Activated CD4-positive, alpha-beta T cell treated with anti-CD3 and anti-CD28 coated beads, Interleukin-2, amount 10 ng/mL, durations not matched to agents 24 days and 14 days (primary cell): ENCODE measurements at regions of chr5 and their contacts with region 1.

Region 1: GRCh38 chr5:5421961-5422818 is at the start of gene ICE1:
- DNase-seq: peak; percentile 98
- H3K4me3 Mint-ChIP-seq: peak within 1 kb of the TSS; percentile 97
- H3K27ac Mint-ChIP-seq: peak within 1 kb of the TSS; percentile 98
- H3K4me1 Mint-ChIP-seq: peaks cover 22% of the 10 kb centered on the region
- H3K27me3 Mint-ChIP-seq: no peaks in the 10 kb centered on the region
- total RNA-seq, gene ICE1: 35.6 and 36.9 TPM in 2 replicates

Region 2: DNA sequence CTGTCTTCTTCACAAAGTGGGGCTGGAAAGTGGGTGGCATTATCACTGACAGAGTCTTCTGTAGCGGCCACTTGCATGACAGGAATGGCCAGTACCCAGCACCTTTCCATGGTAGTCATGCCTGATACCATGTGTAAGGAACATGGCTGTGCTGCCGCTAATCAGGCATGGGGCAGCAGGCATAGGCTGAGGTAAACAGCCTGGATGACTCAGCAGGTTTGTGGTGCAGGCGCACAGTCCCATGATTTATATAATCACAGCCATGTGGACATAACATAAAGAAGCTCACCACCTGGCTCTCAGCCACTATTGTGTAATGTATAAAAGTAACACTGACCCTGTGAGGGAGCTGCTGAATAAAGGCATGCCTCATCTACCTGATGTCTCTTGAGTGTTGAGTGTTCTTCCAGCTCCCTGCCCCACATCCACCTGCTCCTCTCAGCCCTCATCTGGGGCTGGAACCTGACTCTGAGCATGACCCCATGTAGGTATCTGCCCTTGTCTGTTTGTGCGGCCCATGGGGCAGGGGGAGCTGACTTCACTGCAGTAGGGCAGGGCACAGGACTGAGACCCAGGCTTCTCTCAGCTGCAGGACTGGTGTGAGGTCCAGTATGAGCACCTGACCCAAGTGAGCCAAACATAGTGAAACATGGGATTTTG is 12.9 kb before region 1 on chr5:
- intact Hi-C with region 1: no loop called
- DNase-seq: no peak
- H3K4me3 Mint-ChIP-seq: no peak overlapping the region
- H3K27ac Mint-ChIP-seq: no peak overlapping the region
- H3K4me1 Mint-ChIP-seq: no peaks in the 10 kb centered on the region
- H3K27me3 Mint-ChIP-seq: no peaks in the 10 kb centered on the region

Region 3: GRCh38 chr5:5523066-5523505 is 100.9 kb after region 1 on chr5:
- intact Hi-C with region 1: loop called (anchors 5 kb)
- DNase-seq: peak; percentile 87
- H3K4me3 Mint-ChIP-seq: peak overlapping the region; percentile 37
- H3K27ac Mint-ChIP-seq: peak overlapping the region; percentile 55
- H3K4me1 Mint-ChIP-seq: peaks cover 23% of the 10 kb centered on the region
- H3K27me3 Mint-ChIP-seq: no peaks in the 10 kb centered on the region